Activated CD4-positive, alpha-beta T cell treated with anti-CD3 and anti-CD28 coated beads for 36 hours (primary cell): ENCODE measurements at regions of chr5 and their contacts with region 1.

Region 1: DNA sequence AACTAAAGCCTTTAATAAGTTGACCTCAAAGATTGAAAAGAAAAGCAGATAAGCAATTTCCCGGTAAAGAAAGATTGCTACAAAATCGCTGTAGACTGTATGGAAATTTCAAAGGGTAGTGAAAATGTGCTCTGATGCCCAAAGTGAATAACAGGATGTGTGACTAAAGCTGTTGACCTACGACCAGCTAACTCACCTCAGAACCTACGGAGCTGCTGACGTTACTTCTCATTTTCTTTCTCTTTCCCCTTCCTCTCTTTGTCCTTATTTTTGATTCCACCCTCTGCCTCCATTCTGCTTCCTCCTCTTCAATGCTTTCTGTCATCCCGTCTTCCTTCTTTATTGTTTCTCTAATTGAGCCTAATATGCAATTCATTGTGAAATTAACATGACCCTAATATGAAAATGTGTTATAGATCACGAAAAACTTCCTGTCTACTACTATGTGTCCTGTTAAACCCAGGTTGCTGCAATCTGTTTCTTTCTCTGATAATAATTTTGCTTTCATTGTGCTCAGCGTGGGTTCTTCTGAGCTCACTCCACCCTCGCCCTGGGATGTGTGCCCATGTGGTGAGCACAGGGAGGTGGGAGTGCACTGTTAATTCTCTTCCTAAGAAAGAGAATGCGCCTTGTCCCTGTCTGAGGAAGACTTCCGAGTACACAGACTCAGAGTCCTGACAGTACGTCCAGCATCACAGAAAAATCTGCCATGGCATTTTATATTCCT is 103.0 kb downstream of the PDE4D start:
- DNase-seq: no peak
- ATAC-seq: peak; percentile 82
- H3K4me3 Mint-ChIP-seq: peak overlapping the region; percentile 55
- H3K27ac Mint-ChIP-seq: peak overlapping the region; percentile 82
- H3K4me1 Mint-ChIP-seq: peaks cover 25% of the 10 kb centered on the region
- H3K27me3 Mint-ChIP-seq: peaks cover 16% of the 10 kb centered on the region

Region 2: GRCh38 chr5:59760798-59761348 is 29.7 kb before region 1 on chr5:
- CTCF ChIA-PET with region 1: interaction called, 5 read pairs
- POLR2A ChIA-PET with region 1: no interaction called
- intact Hi-C with region 1: loop called in 1 of 2 experiments (anchors 2 kb)
- DNase-seq: peak; percentile 62
- ATAC-seq: peak; percentile 95
- H3K4me3 Mint-ChIP-seq: no peak overlapping the region
- H3K27ac Mint-ChIP-seq: no peak overlapping the region
- H3K4me1 Mint-ChIP-seq: no peaks in the 10 kb centered on the region
- H3K27me3 Mint-ChIP-seq: peaks cover 2% of the 10 kb centered on the region

Region 3: GRCh38 chr5:59777028-59777427 is 13.5 kb before region 1 on chr5:
- CTCF ChIA-PET with region 1: interaction called, 18 read pairs
- POLR2A ChIA-PET with region 1: no interaction called
- intact Hi-C with region 1: no loop called
- DNase-seq: no peak
- ATAC-seq: no peak
- H3K4me3 Mint-ChIP-seq: no peak overlapping the region
- H3K27ac Mint-ChIP-seq: no peak overlapping the region
- H3K4me1 Mint-ChIP-seq: no peaks in the 10 kb centered on the region
- H3K27me3 Mint-ChIP-seq: no peaks in the 10 kb centered on the region